KBM-7 (cell line): ENCODE measurements at regions of chr13 and their contacts with region 1.

Region 1: DNA sequence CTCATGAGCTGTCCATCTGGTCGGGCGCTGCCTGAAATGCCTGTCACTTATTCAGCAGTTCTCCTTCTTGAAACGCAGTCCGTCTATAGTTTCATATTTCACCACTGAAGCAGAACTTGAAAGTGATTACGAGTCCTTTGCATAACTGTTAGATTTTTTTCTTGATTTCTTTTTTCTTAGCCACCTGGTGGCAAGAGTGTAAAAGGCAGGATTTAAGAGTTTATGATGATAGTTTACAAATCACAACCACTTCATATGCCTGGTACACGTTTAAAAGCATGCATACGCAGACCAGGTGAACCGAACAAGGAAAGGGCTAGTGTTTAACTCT is 45.8 kb downstream of the GGACT start:
- DNase-seq: peak; percentile 54

Region 2: DNA sequence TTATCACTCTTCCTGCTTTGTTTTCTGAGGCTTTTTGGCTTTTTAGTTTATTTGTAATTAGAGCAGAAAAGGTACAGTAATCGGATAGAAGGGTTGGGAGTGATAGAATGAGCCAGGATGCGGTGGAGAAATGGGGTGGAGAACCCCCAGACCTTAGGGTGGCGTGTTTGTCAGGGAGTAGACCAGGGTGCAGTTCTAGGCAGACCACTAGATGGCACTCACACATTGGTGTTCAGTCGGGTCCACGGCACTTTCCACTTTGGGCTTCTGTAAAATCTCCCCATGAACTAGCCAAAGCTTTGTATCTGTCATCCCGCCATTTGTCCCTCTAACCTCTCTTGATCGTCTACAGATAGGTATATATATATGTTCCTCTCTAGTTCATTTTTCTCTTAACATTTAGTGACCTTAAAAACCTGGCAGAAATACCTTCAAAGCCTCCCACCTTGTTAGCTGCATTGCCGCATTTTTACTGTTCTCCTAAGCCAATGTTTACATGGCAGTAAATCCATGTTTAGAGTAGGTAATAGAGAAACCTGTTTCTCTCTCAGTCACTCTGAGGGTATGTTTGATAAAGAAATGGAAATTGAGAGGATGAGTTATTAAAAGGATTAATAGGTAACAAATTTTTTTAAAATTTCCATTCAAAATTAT is 886.6 kb before region 1 on chr13:
- in situ Hi-C with region 1: loop called (anchors 25 kb)
- DNase-seq: peak; percentile 77

Region 3: DNA sequence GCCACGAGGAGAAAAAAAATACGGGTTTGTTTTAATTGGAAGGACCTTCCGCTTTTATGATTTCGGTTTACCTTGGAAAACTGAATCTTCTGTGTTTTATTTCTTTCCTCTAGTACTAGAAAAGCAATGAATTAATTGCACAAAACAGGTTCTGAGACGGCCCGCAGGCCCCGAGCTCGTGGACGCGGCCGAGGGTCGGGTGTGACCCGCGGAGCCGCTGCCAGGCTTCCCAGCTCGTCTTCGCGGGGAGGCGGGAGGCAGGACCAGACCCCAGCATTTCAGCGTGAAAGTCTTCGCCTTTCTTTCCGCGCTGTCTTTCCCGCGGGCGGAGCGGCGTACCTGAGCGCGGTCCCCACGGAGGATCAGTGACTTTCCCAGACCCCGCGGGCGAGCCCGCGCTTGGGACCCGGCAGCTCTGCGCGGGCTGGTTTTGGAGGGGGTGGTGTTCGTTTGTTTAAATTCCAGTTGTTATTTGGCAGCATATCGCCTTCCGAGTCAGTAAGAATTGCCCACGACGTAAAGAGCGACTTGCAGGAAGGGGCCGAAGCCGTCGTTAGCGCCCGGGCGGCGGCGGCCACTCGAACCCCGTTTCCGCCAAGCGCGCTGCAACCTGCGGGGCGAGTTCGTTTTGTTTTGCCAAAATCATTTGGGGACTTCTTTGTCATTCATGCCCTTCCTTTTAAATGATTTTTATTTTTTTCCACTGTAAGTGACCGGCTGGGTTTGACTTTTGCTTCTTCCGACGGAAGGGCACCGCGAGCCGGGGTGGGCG is 647.4 kb before region 1 on chr13:
- in situ Hi-C with region 1: loop called (anchors 25 kb)
- DNase-seq: no peak